ENCODE measurements at regions of chr17 and their contacts with region 1.

Region 1: DNA sequence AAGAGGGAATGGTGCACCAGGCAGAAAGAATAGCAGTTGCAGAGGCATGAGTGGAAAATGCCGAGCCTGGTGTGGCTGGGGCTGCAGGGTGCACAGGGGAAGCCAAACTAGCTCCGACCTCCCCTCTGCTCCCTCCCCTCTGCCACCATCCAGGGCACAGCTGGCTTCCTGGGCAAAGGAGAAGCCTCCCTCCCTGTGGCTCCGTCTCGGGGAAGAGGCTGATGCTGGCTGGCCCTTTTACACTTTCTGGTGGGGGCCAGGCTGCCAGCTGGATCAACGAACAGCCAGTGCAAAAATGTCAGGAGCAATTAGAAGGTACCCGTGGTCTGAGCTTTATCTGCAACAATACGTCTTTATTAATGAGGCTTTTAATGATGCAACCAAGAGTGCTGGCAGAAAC is 37.1 kb upstream of the KCNJ12 start:
- DNase-seq: no peak
- ATAC-seq: no peak
- H3K4me3 Mint-ChIP-seq: no peak overlapping the region
- H3K27ac Mint-ChIP-seq: no peak overlapping the region
- H3K4me1 Mint-ChIP-seq: no peaks in the 10 kb centered on the region
- H3K27me3 Mint-ChIP-seq: no peaks in the 10 kb centered on the region

Region 2: DNA sequence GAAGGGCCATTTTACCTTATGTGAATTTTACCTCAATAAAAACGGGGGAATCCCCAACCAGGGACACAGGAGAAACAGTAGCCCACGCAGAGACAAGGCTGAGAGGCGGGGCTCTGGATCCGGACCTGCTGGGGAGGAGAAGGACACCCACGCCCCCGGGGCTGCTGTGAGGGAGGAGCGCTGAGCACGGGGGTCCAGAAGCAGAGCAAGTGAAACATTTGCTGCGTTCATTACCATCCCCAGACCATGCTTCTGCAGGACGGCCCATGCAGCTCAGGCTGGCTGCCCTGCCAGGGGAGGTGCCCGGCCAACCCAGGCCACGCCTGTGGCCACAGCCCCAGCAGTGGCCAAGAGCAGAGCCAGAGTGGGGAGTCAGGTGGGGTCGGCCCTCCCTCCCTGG is 403.3 kb after region 1 on chr17:
- CTCF ChIA-PET with region 1: no interaction called
- POLR2A ChIA-PET with region 1: no interaction called
- intact Hi-C with region 1: loop called in 1 of 2 experiments (anchors 10 kb)
- DNase-seq: no peak
- ATAC-seq: no peak
- H3K4me3 Mint-ChIP-seq: no peak overlapping the region
- H3K27ac Mint-ChIP-seq: no peak overlapping the region
- H3K4me1 Mint-ChIP-seq: no peaks in the 10 kb centered on the region
- H3K27me3 Mint-ChIP-seq: no peaks in the 10 kb centered on the region